ENCODE measurements at regions of chr2 and their contacts with region 1.

Region 1: DNA sequence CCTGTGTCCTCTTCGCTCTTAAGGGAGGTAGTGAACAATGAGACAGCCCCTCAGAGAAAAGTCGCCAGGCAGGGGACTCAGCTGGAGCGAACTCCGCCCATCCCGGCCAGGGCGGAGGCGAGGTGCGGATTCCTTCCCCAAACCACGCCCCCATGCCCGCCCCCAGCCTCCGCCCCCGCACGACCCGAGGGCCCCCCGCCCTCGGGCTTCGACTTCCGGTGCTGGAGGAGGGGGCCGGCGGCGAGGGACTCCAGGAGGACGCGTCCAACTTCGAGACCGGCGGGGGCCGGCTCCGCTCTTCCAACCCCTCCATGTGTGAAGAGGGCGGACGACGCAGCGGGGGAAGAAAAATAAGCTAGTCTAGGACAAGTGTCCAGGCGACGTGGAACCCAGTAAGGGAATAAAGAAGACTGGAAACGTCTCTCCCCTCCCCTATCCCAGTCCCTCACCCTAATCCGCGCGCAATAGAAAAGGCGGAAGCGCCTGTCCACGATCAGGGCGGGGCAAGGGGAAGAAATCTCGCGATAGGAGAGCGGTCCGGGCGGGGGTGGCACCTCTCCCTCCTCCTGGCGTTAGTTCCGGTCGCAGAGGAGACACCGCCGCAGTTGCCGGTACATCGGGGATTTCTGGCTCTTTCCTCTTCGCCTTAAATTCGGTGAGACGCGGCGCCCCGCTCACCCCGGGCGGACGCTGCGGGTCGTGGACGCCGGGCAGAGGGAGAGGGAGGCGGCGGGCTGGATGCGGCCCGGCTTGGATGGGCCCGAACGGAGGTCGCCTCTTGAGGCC is at the start of gene BZW1:
- DNase-seq: peak; percentile 98
- ATAC-seq: peak; percentile 79
- H3K4me3 Mint-ChIP-seq: peak within 1 kb of the TSS; percentile 87
- H3K27ac Mint-ChIP-seq: peak within 1 kb of the TSS; percentile 96
- H3K4me1 Mint-ChIP-seq: peaks cover 45% of the 10 kb centered on the region
- H3K27me3 Mint-ChIP-seq: no peaks in the 10 kb centered on the region
- total RNA-seq, gene BZW1: 413 to 474 TPM

Region 2: GRCh38 chr2:200259577-200260008 is 551.9 kb before region 1 on chr2:
- CTCF ChIA-PET with region 1: no interaction called
- POLR2A ChIA-PET with region 1: no interaction called
- intact Hi-C with region 1: no loop called
- DNase-seq: no peak
- ATAC-seq: no peak
- H3K4me3 Mint-ChIP-seq: no peak overlapping the region
- H3K27ac Mint-ChIP-seq: no peak overlapping the region
- H3K4me1 Mint-ChIP-seq: no peaks in the 10 kb centered on the region
- H3K27me3 Mint-ChIP-seq: peaks cover 6% of the 10 kb centered on the region

Region 3: DNA sequence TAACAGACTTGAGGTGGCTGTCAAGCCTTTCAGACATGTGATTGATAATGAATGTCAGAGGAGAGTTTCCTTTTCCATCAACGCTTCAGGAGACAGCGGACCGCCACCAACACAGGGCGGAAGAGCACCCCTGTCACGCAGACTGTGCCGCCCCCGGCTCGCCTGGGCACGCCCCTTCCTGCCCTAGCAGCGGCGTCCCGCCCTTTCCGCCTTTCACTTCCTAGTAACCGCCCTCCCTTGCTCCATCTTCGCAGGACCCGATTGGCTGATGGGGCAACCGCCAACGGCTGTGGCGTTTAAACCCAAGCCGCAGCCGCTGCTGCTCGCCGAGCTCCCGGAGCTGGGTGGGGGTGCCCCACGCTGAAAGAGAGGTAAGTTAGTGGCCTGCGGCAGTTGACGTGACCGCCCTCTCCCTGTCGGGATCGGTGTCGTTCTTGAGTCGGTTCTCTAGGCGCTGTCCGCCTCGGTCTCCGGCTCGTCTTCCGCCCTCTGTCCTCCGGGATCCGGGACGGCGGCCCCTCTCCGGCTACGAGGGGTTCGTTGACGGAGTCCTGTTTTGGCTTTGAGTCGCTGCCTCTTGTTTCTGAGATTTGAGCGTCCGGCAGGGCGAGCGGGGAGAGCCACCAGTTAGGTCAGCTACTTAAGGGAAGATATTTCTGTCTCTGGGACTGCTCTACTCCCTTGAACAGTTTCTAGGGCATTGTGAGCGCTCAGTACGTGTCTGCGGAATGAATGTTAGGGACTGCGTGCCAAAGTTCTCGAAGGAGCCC is 285.5 kb before region 1 on chr2 and contains the start of gene SGO2:
- CTCF ChIA-PET with region 1: no interaction called
- POLR2A ChIA-PET with region 1: no interaction called
- intact Hi-C with region 1: loop called in 1 of 2 experiments (anchors 1 kb)
- DNase-seq: peak; percentile 98
- ATAC-seq: peak; percentile 99
- H3K4me3 Mint-ChIP-seq: peak within 1 kb of the TSS; percentile 97
- H3K27ac Mint-ChIP-seq: peak within 1 kb of the TSS; percentile 90
- H3K4me1 Mint-ChIP-seq: peaks cover 23% of the 10 kb centered on the region
- H3K27me3 Mint-ChIP-seq: no peaks in the 10 kb centered on the region
- total RNA-seq, gene SGO2: 49.9 to 56.7 TPM

Region 4: DNA sequence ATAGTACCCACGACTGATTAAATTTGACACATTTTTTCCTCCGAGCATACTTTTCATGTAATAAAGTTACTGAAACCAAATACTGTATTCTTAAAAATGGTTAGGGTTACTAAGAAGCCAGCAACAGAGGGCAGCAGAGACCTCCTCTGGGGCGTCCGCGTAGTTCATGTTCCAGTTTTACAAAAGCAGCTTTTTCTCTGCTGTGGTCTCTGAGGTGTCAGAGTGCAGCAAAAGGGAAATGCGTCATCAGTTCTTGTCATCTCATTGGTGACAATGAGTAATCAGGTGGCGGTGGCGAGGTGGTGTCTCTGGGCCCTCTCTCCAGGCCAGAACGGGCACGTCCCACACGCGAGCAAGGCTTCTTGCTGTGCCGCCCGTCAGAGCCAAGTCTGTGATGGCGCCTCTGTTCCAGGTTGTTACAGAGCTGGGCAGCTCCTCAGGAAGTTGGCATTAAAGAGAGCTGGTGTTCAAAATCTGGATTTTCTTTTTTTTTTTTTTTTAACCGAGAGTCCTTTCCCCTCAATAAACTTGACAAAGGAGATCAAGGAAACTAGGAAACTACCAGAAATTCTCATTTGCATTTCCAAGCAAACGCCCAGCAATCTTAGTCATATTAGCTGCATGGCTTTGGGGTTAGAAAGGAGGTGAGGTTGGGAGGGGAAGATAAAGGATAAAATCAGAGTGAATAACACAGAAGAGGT is 98.4 kb before region 1 on chr2:
- CTCF ChIA-PET with region 1: interaction called, 5 read pairs
- POLR2A ChIA-PET with region 1: interaction called, 12 read pairs
- intact Hi-C with region 1: loop called (anchors 1 kb)
- DNase-seq: peak; percentile 98
- ATAC-seq: peak; percentile 93
- H3K4me3 Mint-ChIP-seq: peak overlapping the region; percentile 70
- H3K27ac Mint-ChIP-seq: peak overlapping the region; percentile 100
- H3K4me1 Mint-ChIP-seq: peaks cover 47% of the 10 kb centered on the region
- H3K27me3 Mint-ChIP-seq: no peaks in the 10 kb centered on the region

Region 5: GRCh38 chr2:200888704-200889625 is 77.4 kb after region 1 on chr2 and contains the starts of genes NIF3L1 and PPIL3:
- CTCF ChIA-PET with region 1: no interaction called
- POLR2A ChIA-PET with region 1: interaction called, 7 read pairs
- intact Hi-C with region 1: loop called (anchors 1 kb)
- DNase-seq: peak; percentile 99
- ATAC-seq: peak; percentile 83
- H3K4me3 Mint-ChIP-seq: peak within 1 kb of the TSS; percentile 98
- H3K27ac Mint-ChIP-seq: peak within 1 kb of the TSS; percentile 100
- H3K4me1 Mint-ChIP-seq: peaks cover 46% of the 10 kb centered on the region
- H3K27me3 Mint-ChIP-seq: no peaks in the 10 kb centered on the region
- total RNA-seq, gene NIF3L1: 37.0 to 47.7 TPM
- total RNA-seq, gene PPIL3: 52.6 to 53.0 TPM

Region 6: GRCh38 chr2:201071479-201072200 is 260.1 kb after region 1 on chr2 and contains the starts of genes HYCC2 and NDUFB3:
- CTCF ChIA-PET with region 1: no interaction called
- POLR2A ChIA-PET with region 1: no interaction called
- intact Hi-C with region 1: loop called (anchors 1 to 5 kb)
- DNase-seq: peak; percentile 95
- ATAC-seq: peak; percentile 94
- H3K4me3 Mint-ChIP-seq: peak within 1 kb of the TSS; percentile 97
- H3K27ac Mint-ChIP-seq: peak within 1 kb of the TSS; percentile 96
- H3K4me1 Mint-ChIP-seq: peaks cover 58% of the 10 kb centered on the region
- H3K27me3 Mint-ChIP-seq: no peaks in the 10 kb centered on the region
- total RNA-seq, gene HYCC2: 15.8 to 16.0 TPM
- total RNA-seq, gene NDUFB3: 126 to 150 TPM

Region 7: DNA sequence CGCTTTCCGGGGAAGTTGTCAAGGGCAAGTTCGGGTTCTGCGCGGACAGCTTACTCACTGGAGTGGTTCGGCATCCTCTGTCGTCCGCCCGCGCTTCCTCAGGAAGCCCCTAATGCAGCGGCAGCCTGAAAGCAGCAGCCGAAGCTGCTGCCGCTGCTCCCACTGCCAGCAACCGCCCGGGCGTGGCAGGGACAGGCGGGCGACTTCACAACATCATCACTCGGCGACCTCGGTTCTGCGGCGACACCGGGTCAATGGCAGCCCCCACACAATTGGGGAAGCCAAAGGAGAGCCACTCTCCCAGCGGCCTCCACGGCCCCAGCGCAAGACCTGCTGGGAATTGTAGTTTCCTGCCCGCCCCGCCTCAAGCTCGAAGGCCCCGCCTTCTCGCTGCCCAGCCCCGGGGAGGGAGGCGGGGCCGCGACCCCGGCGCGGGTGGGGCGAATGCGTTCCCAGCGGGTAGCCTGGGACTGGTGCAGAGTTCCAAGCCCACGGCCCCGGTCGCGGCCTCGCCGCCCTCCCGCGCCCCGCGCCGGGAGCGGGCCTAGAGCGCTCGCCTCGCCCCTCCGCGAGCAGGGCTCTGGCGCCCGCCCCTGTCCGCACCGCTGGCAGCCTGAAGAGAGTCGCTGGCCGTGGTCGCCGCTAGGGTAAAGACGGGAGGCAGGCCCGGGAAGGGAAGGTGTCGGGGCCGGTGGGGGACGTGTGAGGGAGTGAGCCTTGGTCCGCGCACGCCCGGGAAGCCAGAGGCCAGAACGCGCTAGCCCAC is 639.9 kb after region 1 on chr2 and contains the starts of genes STRADB and TRAK2:
- CTCF ChIA-PET with region 1: no interaction called
- POLR2A ChIA-PET with region 1: no interaction called
- intact Hi-C with region 1: loop called in 1 of 2 experiments (anchors 2 kb)
- DNase-seq: peak; percentile 98
- ATAC-seq: peak; percentile 91
- H3K4me3 Mint-ChIP-seq: peak within 1 kb of the TSS; percentile 95
- H3K27ac Mint-ChIP-seq: peak within 1 kb of the TSS; percentile 97
- H3K4me1 Mint-ChIP-seq: peaks cover 44% of the 10 kb centered on the region
- H3K27me3 Mint-ChIP-seq: no peaks in the 10 kb centered on the region
- total RNA-seq, gene STRADB: 20.5 to 21.8 TPM
- total RNA-seq, gene TRAK2: 22.5 to 25.6 TPM

Region 8: DNA sequence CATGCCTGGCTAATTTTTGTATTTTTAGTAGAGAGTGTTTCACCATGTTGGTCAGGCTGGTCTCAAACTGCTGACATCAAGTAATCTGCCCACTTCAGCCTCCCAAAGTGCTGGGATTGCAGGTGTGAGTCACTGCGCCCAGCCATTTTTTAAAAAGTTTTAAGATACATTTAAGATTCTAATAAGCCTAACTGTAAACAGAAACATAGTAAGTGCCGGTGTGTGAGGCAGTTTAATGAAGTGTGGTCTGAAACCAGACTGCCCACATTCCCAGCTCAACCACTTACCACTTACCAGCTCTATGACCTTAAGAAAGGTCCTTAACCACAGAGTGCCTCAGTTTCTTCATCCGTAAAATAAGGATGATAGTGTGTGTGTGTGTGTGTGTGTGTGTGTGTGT is 789.4 kb after region 1 on chr2:
- CTCF ChIA-PET with region 1: no interaction called
- POLR2A ChIA-PET with region 1: no interaction called
- intact Hi-C with region 1: no loop called
- DNase-seq: no peak
- ATAC-seq: no peak
- H3K4me3 Mint-ChIP-seq: no peak overlapping the region
- H3K27ac Mint-ChIP-seq: no peak overlapping the region
- H3K4me1 Mint-ChIP-seq: no peaks in the 10 kb centered on the region
- H3K27me3 Mint-ChIP-seq: peaks cover 14% of the 10 kb centered on the region